Activated naive CD4-positive, alpha-beta T cell treated with anti-CD3 and anti-CD28 coated beads for 36 hours (primary cell): ENCODE measurements at regions of chr3 and their contacts with region 1.

Region 1: GRCh38 chr3:10026084-10026890 is at the start of gene FANCD2:
- DNase-seq: peak; percentile 94
- H3K4me3 Mint-ChIP-seq: peak within 1 kb of the TSS; percentile 92
- H3K27ac Mint-ChIP-seq: peak within 1 kb of the TSS; percentile 98
- H3K4me1 Mint-ChIP-seq: peaks cover 22% of the 10 kb centered on the region
- H3K27me3 Mint-ChIP-seq: no peaks in the 10 kb centered on the region
- total RNA-seq, gene FANCD2: 86.3 to 90.8 TPM

Region 2: GRCh38 chr3:9649791-9650521 is 376.3 kb before region 1 on chr3:
- CTCF ChIA-PET with region 1: no interaction called
- intact Hi-C with region 1: loop called (anchors 1 kb)
- DNase-seq: no peak
- H3K4me3 Mint-ChIP-seq: peak overlapping the region; percentile 94
- H3K27ac Mint-ChIP-seq: peak overlapping the region; percentile 86
- H3K4me1 Mint-ChIP-seq: peaks cover 32% of the 10 kb centered on the region
- H3K27me3 Mint-ChIP-seq: no peaks in the 10 kb centered on the region

Region 3: GRCh38 chr3:9951962-9952805 is 74.1 kb before region 1 on chr3 and contains the start of gene PRRT3:
- CTCF ChIA-PET with region 1: no interaction called
- intact Hi-C with region 1: loop called (anchors 5 kb)
- DNase-seq: peak; percentile 77
- H3K4me3 Mint-ChIP-seq: peak within 1 kb of the TSS; percentile 81
- H3K27ac Mint-ChIP-seq: peak within 1 kb of the TSS; percentile 86
- H3K4me1 Mint-ChIP-seq: peaks cover 16% of the 10 kb centered on the region
- H3K27me3 Mint-ChIP-seq: no peaks in the 10 kb centered on the region
- total RNA-seq, gene PRRT3: 5.8 to 6.7 TPM

Region 4: GRCh38 chr3:10010486-10011465 is 15.5 kb before region 1 on chr3:
- CTCF ChIA-PET with region 1: no interaction called
- intact Hi-C with region 1: loop called (anchors 1 kb)
- DNase-seq: peak; percentile 85
- H3K4me3 Mint-ChIP-seq: peak overlapping the region; percentile 12
- H3K27ac Mint-ChIP-seq: no peak overlapping the region
- H3K4me1 Mint-ChIP-seq: peaks cover 13% of the 10 kb centered on the region
- H3K27me3 Mint-ChIP-seq: peaks cover 6% of the 10 kb centered on the region

Region 5: DNA sequence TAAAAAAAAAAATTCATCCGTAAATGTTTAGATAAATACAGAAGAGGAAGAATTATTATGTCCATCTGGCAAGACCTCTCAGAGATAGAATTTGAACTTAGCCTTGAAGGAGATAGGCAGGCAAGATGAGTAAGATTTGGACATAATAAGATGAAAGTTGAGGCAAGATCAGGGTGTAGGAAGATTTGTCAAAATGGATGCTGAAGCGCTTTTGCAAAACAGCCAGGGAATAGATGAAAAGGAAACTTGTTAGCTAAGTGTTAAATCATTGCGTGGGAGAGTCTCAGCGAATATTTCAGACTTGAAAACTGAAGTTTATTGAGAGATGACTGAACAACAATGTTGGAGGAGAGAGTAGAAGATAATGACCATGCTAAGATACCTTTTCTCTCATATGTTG is 96.4 kb after region 1 on chr3:
- CTCF ChIA-PET with region 1: no interaction called
- intact Hi-C with region 1: no loop called
- DNase-seq: no peak
- H3K4me3 Mint-ChIP-seq: no peak overlapping the region
- H3K27ac Mint-ChIP-seq: peak overlapping the region; percentile 43
- H3K4me1 Mint-ChIP-seq: peaks cover 45% of the 10 kb centered on the region
- H3K27me3 Mint-ChIP-seq: no peaks in the 10 kb centered on the region

Region 6: GRCh38 chr3:10142707-10143566 is 116.7 kb after region 1 on chr3:
- CTCF ChIA-PET with region 1: no interaction called
- intact Hi-C with region 1: loop called (anchors 1 kb)
- DNase-seq: peak; percentile 48
- H3K4me3 Mint-ChIP-seq: peak overlapping the region; percentile 84
- H3K27ac Mint-ChIP-seq: peak overlapping the region; percentile 87
- H3K4me1 Mint-ChIP-seq: peaks cover 32% of the 10 kb centered on the region
- H3K27me3 Mint-ChIP-seq: no peaks in the 10 kb centered on the region

Region 7: DNA sequence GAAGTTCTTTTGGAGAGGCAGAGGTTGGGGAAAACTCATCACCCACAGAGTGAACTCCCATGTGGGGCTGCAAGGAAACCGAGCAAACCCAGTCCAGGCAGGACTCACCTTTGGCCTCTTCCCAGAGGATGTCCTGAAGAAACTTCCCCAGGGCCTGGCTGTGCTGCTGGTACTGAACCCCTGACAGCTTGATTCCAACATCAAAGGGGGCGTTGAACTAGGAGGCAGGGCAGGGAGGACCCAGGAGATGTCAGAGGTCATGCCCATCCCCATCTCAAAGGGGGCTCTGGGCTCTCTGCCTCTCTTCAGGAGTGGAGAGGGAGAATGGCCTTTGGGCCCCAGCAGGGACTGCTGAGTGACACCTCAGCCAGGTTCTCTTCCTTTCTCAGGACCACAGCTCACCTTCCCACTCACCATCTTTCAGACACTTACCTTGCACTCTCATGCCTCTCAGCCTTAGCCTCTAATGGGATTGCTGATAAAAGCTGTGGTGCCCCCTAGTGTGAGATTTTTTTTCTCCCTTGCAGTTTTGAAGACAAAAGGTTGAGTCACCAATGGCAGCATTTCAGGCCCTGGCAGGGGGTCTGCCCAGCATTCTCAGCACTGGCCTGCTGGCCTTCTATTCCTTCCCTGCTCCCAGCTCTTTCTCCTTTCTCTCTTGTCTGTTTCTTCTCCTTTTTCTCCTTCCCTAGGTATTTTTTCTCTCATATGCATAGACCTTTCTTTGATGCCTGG is 260.5 kb after region 1 on chr3:
- CTCF ChIA-PET with region 1: no interaction called
- intact Hi-C with region 1: loop called (anchors 5 kb)
- DNase-seq: peak; percentile 67
- H3K4me3 Mint-ChIP-seq: no peak overlapping the region
- H3K27ac Mint-ChIP-seq: no peak overlapping the region
- H3K4me1 Mint-ChIP-seq: peaks cover 41% of the 10 kb centered on the region
- H3K27me3 Mint-ChIP-seq: no peaks in the 10 kb centered on the region